GM12878 (cell line): ENCODE measurements at regions of chr4 and their contacts with region 1.

Region 1: DNA sequence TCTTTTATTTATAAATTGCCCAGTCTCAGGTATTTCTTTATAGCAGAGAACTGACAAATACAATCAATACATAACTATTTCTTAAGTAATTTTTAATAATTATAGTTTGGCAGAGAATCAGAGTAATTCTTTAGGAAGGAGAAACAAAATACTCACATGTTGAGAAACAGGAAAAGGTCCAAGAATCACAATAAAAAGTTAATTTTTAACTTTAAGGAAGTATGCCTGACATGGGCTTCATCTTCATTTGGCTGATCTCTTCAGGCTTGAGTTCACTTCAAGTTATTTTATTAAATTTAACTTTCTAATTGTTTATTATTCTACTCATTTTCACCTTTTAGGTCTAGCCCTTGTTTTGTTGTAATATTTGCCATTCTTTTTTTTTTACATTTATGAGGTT is 36.1 kb upstream of the RNF150 start:
- DNase-seq: no peak
- ATAC-seq: no peak
- H3K4me3 ChIP-seq: no peak overlapping the region
- H3K27ac ChIP-seq: no peak overlapping the region
- H3K4me1 ChIP-seq: no peaks in the 10 kb centered on the region
- H3K27me3 ChIP-seq: no peaks in the 10 kb centered on the region
- CTCF ChIP-seq: no peak
- EP300 ChIP-seq: no peak
- POLR2A ChIP-seq: no peak
- RAD21 ChIP-seq: no peak

Region 2: DNA sequence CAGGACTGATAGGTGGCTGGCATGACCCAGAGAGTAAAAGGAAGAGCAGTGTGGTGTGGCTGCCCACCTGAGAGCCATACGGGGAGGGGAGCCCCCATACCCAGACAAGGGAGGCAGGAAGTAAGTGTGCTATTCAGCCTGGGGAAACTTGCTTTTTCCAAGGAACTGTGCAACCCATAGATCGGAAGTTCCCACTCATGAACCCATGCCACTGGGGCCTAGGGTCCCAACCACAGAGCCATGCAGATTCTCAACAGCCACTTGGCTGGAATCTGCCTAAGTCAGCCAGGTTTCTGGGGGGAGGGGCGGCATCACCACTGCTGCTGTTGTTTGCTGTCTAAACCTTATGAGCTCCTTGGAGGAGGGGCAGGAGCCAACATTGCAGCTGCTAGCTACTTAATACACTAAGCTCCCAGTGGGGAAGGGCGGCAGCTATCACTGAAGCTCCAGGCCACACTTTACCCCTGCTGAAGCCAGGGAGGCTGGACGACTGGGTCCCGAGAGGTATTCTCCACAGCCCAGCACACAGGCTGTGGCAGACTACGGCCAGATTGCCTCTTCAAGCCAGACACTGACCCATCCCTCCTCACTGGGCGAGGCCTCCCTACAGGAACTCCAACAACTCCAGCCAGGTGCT is 1266.3 kb after region 1 on chr4:
- CTCF ChIA-PET with region 1: no interaction called
- POLR2A ChIA-PET with region 1: no interaction called
- RAD21 ChIA-PET with region 1: no interaction called
- SMC1A ChIA-PET with region 1: no interaction called
- in situ Hi-C with region 1: no loop called
- intact Hi-C with region 1: no loop called
- DNase-seq: no peak
- ATAC-seq: peak; percentile 49
- H3K4me3 ChIP-seq: no peak overlapping the region
- H3K27ac ChIP-seq: no peak overlapping the region
- H3K4me1 ChIP-seq: no peaks in the 10 kb centered on the region
- H3K27me3 ChIP-seq: no peaks in the 10 kb centered on the region
- CTCF ChIP-seq: no peak
- EP300 ChIP-seq: no peak
- POLR2A ChIP-seq: no peak
- RAD21 ChIP-seq: no peak

Region 3: DNA sequence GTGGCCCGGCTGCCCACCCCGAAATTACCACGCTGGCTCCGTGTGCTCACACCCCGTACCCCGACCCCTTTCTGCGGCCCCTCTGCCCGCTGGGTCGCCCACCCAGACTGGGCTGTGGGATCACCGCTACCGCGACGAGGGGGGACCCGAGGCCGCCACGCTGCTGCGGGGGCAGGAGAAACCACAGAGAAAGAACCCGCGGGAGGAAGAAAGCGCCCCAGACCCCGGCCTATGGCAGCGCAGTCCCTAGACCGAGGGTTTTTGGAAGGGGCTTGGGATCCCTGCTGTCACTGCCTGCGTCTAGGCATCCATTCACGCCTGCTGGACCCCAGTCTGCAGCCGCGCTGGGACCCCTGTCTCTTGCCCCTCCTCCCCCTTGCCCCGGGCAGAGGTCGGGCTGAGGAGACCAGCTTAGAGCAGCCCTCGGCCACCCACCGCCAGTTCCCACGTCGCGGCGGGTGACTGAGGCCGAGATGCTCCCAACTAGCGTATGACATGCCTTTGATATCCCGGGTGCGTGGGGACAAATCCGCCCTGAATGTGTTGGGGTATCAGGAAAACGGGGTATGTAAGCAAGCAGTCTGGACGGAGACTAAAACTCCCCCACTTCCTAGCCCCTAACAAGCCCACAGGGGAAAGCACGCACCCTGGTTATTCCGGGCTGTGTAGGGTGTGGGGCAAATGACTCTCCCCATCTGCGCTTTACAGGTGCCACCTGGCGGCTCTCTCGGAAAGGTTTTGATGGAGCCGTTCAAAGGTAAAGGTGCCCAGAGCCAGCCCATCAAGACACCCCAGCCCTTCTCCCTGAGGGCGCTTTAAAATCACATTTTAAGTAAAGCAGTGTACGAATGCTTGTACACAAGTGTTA is 1677.6 kb after region 1 on chr4:
- CTCF ChIA-PET with region 1: no interaction called
- POLR2A ChIA-PET with region 1: no interaction called
- RAD21 ChIA-PET with region 1: no interaction called
- SMC1A ChIA-PET with region 1: no interaction called
- in situ Hi-C with region 1: loop called (anchors 10 kb)
- intact Hi-C with region 1: no loop called
- DNase-seq: no peak
- ATAC-seq: peak; percentile 90
- H3K4me3 ChIP-seq: no peak overlapping the region
- H3K27ac ChIP-seq: no peak overlapping the region
- H3K4me1 ChIP-seq: no peaks in the 10 kb centered on the region
- H3K27me3 ChIP-seq: peaks cover 4 to 6% of the 10 kb centered on the region in 2 experiments; a peak in 2 of 4 replicates
- CTCF ChIP-seq: peak; percentile 31 to 46 (median 31); a peak in 5 of 6 replicates
- EP300 ChIP-seq: no peak
- POLR2A ChIP-seq: no peak
- RAD21 ChIP-seq: peak; percentile 51